Calu3 (cell line): ENCODE measurements at regions of chrX and their contacts with region 1.

Region 1: DNA sequence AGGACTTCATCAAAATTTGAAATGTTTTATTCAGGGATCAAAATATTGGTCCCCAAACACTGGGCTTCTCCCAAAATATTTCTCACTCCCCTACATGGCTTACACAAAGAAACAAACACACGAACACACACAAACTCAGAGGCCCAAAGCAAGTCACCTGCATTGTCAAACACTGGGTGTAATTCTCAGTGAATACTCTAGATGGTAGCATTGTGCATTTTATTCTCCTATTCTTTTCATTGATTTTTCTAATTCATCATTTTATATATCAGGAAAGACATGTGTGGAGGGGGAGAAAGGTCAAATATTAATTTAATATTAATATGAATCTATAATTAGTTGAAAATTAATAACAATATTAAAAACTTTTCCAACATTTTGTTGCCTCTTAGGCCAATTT is 72.3 kb upstream of the TNMD start:
- DNase-seq: no peak
- H3K4me3 Mint-ChIP-seq: no peak overlapping the region
- H3K27ac Mint-ChIP-seq: no peak overlapping the region
- H3K4me1 Mint-ChIP-seq: no peaks in the 10 kb centered on the region
- H3K27me3 Mint-ChIP-seq: peaks cover 16% of the 10 kb centered on the region
- CTCF ChIP-seq: peak; percentile 35

Region 2: GRCh38 chrX:99722092-99722491 is 790.4 kb before region 1 on chrX:
- CTCF ChIA-PET with region 1: no interaction called
- intact Hi-C with region 1: no loop called
- DNase-seq: no peak
- H3K4me3 Mint-ChIP-seq: no peak overlapping the region
- H3K27ac Mint-ChIP-seq: no peak overlapping the region
- H3K4me1 Mint-ChIP-seq: no peaks in the 10 kb centered on the region
- H3K27me3 Mint-ChIP-seq: no peaks in the 10 kb centered on the region
- CTCF ChIP-seq: no peak

Region 3: DNA sequence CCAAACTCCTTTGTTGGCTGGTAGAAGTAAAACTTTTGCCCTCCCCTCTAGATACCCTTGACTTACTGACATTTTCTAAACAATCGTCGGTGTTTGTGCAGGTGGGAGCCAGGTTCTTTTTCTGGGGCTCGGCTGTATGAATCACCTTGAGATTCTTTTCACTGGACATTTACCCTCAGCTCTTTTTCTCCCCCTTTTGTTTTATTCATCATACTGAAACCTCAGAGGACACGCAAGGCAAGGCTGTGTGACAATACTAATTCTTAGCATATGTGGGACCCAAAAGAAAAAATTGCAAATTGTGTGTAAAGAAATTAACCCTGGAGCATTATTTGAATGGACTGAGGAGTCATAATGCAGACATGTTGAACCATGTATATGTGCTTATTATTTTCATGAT is 296.4 kb before region 1 on chrX:
- CTCF ChIA-PET with region 1: no interaction called
- intact Hi-C with region 1: no loop called
- DNase-seq: no peak
- H3K4me3 Mint-ChIP-seq: no peak overlapping the region
- H3K27ac Mint-ChIP-seq: no peak overlapping the region
- H3K4me1 Mint-ChIP-seq: no peaks in the 10 kb centered on the region
- H3K27me3 Mint-ChIP-seq: no peaks in the 10 kb centered on the region
- CTCF ChIP-seq: no peak

Region 4: DNA sequence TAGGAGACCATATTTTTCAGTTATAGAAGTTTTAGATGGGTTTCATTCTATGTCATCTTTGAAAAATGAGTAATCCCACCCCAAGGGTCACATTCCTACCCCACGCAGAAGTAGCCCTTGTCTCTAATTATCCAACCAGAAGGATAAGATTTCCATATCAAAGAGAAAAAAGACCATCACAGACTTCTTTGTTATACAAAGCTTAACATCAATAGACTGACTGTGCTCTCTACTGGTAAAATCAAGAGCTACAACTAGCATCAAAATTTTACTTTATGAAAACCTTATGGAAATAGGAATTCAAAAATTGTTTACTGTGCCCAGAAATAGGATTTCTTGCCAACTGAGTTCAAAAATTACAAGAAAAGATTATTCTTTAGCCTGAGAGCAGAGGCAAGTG is 97.1 kb after region 1 on chrX:
- CTCF ChIA-PET with region 1: interaction called, 3 read pairs
- intact Hi-C with region 1: loop called (anchors 2 kb)
- DNase-seq: no peak
- H3K4me3 Mint-ChIP-seq: no peak overlapping the region
- H3K27ac Mint-ChIP-seq: no peak overlapping the region
- H3K4me1 Mint-ChIP-seq: no peaks in the 10 kb centered on the region
- H3K27me3 Mint-ChIP-seq: no peaks in the 10 kb centered on the region
- CTCF ChIP-seq: no peak

Region 5: DNA sequence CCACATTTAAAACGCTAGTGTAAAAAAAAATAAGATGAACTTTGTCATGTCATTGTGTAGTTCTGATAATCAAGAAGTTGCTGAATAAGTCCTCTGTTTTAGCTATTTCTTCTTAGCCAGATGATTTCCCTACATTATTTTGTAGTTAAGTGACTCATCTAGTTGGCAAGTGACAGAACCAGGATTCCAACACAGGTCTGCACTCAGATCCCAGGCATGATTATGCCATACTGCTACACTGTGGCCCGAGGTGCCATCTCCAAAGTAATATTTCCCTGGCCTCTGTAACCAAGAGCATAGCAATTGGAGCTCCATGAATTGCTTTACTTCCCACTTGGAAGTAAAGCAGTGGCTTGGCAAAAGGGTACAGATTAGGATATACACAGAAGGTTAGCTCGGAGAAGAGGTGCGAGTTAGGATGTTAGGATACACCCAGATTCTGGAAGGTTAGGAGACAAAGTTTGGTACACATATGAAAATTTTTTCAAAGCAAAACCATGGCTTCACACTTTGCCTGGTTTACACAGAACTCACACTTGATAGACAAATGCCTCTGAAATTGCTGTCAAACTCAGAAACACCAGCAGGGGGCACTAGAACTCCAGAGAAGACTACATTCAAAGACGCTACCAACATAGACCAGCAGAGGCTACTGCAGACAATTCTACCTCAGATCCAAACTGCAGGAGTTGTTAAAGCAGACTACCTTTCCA is 173.0 kb after region 1 on chrX:
- CTCF ChIA-PET with region 1: no interaction called
- intact Hi-C with region 1: loop called (anchors 10 kb)
- DNase-seq: peak; percentile 73
- H3K4me3 Mint-ChIP-seq: no peak overlapping the region
- H3K27ac Mint-ChIP-seq: no peak overlapping the region
- H3K4me1 Mint-ChIP-seq: no peaks in the 10 kb centered on the region
- H3K27me3 Mint-ChIP-seq: no peaks in the 10 kb centered on the region
- CTCF ChIP-seq: peak; percentile 76

Region 6: GRCh38 chrX:100768679-100769338 is 256.3 kb after region 1 on chrX:
- CTCF ChIA-PET with region 1: interaction called, 8 read pairs
- intact Hi-C with region 1: loop called (anchors 1 kb)
- DNase-seq: peak; percentile 85
- H3K4me3 Mint-ChIP-seq: no peak overlapping the region
- H3K27ac Mint-ChIP-seq: peak overlapping the region; percentile 73
- H3K4me1 Mint-ChIP-seq: peaks cover 7% of the 10 kb centered on the region
- H3K27me3 Mint-ChIP-seq: no peaks in the 10 kb centered on the region
- CTCF ChIP-seq: peak; percentile 98